Sigmoid colon (tissue), 7 donors: ENCODE measurements at regions of chr3 and their contacts with region 1.

Region 1: DNA sequence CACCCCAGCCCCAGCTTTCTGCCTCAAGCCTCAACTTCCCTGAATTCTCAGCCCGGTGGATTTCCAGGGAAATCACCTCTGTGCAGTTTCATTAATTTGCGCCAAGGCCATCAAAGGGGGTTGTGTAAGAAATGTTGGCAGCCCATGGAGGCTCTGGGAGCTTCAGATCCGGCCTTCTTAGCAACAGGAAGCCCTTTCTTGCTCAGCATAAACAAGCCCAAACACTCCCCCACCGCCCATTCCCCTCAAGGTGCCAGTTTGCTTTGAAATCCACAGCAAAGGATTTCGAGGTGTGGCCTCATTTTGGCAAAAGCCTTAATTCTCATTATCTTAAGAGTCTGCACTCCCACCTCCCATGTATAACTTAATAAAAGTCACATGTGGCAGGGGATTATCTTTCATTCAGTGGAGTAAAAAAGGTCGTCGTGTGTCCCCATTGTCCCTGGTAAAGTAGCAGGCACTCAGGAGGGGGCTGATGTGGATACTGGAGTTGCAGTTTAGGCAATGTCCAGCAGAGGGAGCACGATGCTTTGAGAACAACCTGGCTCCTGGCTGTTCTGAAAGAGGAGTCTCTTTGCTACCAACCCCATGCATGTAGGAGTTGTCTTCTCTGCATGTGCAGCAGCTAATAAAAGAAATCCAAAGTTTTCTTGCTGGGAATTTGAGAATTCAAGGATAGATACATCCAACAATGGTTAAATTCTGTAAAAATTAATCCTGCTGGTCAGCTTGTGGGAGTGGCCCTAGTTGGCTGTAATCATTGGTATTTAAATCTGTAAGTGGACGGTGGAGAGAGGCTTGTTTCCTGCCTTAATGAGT is 39.5 kb downstream of the EBLN2 start:
- DNase-seq: peak; percentile 91
- H3K4me3 ChIP-seq: no peak overlapping the region
- H3K27ac ChIP-seq: no peak overlapping the region
- H3K4me1 ChIP-seq: peaks cover 0 to 6% (median 0%) of the 10 kb centered on the region in 4 donors
- H3K27me3 ChIP-seq: no peaks in the 10 kb centered on the region
- CTCF ChIP-seq: peak; percentile 90 to 95 (median 92)
- EP300 ChIP-seq: no peak
- POLR2A ChIP-seq: no peak

Region 2: DNA sequence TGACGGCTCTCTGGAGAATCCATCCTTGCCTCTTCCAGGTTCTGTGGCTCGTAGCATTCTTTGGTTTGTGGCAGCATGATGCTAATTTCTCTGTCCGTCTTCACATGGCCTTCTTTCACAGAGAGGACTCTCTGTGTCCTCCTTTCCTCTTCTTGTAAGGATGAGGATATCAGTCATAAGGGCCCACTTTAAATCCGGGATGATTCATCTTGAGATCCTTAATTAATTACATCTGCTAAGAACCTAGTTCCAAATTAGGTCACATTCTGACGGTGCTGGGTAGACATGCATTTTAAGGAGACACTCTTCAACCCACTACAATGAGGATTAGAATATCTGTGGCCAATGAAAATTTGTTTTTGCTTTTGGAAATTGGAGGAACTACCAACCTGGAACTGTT is 228.8 kb before region 1 on chr3:
- intact Hi-C with region 1: no loop called
- DNase-seq: no peak
- H3K4me3 ChIP-seq: no peak overlapping the region
- H3K27ac ChIP-seq: no peak overlapping the region
- H3K4me1 ChIP-seq: no peaks in the 10 kb centered on the region
- H3K27me3 ChIP-seq: no peaks in the 10 kb centered on the region
- CTCF ChIP-seq: no peak
- EP300 ChIP-seq: no peak
- POLR2A ChIP-seq: no peak

Region 3: DNA sequence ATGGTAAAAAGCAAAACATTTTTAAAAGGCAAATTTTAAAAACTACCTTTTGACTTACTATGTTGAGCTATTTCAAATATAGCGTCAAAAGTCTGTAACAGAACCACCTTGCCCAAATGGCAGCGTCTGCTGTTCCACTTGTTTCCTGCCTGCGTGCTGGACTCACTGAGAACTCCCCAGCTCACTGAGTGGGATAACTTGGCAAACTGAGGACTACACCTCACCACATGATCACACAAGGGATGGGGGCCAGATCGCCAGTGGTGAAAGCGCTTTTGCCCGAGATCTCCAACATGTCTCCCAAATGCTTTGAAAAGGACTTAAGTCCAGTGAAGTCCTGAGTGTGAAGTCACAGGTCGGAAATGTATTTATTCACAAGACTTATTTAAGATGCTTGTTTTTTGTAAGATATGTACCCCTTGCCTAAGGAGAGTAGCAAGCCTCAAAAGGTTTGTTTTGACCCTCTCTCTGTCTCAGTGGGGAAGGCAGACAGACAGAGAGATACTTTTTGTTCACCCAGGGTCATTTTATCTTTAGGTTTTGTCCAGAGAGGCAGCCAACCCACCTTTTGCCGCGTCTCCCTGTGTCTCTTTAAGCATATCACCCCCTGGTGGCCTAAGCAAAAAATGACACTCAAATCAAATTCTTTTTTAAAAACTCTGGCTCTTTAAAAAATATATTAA is 331.2 kb after region 1 on chr3:
- intact Hi-C with region 1: loop called (anchors 1 kb)
- DNase-seq: peak; percentile 69
- H3K4me3 ChIP-seq: peak overlapping the region; percentile 4 to 27 (median 15)
- H3K27ac ChIP-seq: peak overlapping the region; percentile 21 to 81 (median 68)
- H3K4me1 ChIP-seq: peaks cover 0 to 92% (median 70%) of the 10 kb centered on the region in 4 donors
- H3K27me3 ChIP-seq: no peaks in the 10 kb centered on the region
- CTCF ChIP-seq: peak in 3 of 4 experiments; percentile 54 to 59 (median 56)
- EP300 ChIP-seq: no peak
- POLR2A ChIP-seq: no peak

Region 4: DNA sequence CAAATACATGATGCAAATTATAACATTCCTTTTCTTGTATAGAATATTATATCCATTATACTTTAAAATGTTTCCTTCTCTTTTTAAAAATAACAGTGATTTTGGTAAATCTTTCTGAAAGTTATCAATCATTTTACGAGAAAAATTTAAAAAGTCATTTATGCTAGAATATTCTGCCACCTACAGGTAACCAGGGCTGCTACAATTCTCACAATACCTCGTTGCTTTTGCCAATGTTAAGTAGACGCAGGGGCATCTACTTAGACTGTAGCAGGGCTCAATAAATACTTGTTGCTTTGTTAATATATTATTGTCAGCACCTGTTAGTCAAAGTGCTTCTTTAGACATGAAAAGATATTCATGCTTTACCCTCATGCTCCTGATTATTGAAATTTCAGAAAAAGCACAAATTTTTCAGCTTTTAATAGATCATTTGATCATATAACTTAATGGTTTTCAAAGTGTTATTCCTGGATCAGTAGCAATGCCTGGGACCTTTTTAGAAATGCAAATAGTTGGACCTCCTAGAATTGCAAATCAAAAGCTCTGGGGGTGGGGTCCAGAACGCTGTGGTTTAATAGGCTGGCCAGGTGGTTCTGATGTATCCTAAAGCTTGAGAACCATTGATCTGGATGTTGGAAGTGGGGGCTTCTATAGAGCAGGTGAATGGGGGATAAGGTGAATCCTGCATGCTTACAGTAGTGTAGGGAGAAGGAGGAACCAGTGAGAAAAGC is 747.4 kb after region 1 on chr3:
- intact Hi-C with region 1: loop called (anchors 2 kb)
- DNase-seq: no peak
- H3K4me3 ChIP-seq: no peak overlapping the region
- H3K27ac ChIP-seq: no peak overlapping the region
- H3K4me1 ChIP-seq: peaks cover 0 to 11% (median 3%) of the 10 kb centered on the region in 4 donors
- H3K27me3 ChIP-seq: no peaks in the 10 kb centered on the region
- CTCF ChIP-seq: peak; percentile 39 to 76 (median 70)
- EP300 ChIP-seq: no peak
- POLR2A ChIP-seq: no peak